Activated CD4-positive, alpha-beta memory T cell treated with anti-CD3 and anti-CD28 coated beads, Interleukin-2, amount 10 ng/mL, durations not matched to agents 7 days and 5 days (primary cell): ENCODE measurements at regions of chr5 and their contacts with region 1.

Region 1: DNA sequence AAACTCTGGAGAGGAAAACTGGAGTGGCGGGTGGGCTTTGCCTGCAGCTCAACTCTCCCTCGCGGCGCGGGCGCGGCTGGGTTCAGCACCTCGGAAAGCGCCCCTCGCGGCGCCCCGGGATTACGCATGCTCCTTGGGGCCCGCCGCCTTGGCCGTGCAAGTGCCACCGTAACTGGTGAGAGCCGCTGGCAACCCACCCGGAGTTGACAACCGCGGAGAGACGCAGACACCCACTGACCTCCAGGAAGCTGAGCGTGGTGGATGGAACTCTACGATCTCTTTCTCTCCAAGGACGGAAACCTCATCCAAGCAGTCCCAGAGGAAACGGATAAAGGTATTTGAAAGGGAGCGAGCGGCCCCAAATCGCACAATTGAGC is 194 bp upstream of the RXFP3 start:
- DNase-seq: peak; percentile 48
- H3K4me3 Mint-ChIP-seq: no peak overlapping the region
- H3K27ac Mint-ChIP-seq: no peak overlapping the region
- H3K4me1 Mint-ChIP-seq: peaks cover 2% of the 10 kb centered on the region
- H3K27me3 Mint-ChIP-seq: peaks cover 49% of the 10 kb centered on the region

Region 2: GRCh38 chr5:33433303-33434240 is 502.4 kb before region 1 on chr5:
- CTCF ChIA-PET with region 1: interaction called, 19 read pairs
- POLR2A ChIA-PET with region 1: interaction called, 3 read pairs
- DNase-seq: no peak
- H3K4me3 Mint-ChIP-seq: no peak overlapping the region
- H3K27ac Mint-ChIP-seq: no peak overlapping the region
- H3K4me1 Mint-ChIP-seq: peaks cover 7% of the 10 kb centered on the region
- H3K27me3 Mint-ChIP-seq: no peaks in the 10 kb centered on the region

Region 3: DNA sequence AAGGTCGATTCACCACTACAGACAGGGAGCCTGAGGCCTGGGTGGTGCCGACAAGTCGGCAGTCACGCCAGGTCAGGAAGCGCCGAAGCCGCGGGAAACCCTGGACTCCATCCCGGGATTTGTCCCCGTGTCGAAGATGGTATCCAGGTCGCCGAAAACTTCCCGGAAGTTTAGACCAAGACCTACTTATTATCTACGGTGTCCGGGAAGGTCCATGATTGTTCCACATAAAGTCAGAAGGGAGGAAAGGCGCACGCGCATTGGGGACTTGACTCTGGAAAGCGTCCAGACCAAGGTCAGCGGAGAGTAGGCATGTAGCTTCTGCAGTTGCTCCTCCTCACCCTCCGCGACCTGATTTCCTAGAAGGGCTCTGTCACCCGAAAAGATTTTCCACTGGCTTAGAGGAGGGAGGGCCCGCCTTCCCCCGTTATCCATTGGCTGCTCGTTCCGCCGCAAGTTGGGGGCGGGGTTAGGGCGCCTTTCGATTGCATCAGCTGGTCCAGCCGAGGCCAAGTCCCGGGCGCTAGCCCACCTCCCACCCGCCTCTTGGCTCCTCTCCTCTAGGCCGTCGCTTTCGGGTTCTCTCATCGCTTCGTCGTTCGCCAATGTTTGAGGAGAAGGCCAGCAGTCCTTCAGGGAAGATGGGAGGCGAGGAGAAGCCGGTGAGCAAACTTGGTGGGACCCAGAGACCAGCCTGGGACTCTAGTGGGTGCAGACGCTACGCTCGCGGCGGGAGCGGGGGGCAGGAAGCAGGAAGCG is 495.3 kb before region 1 on chr5 and contains the start of gene TARS1:
- CTCF ChIA-PET with region 1: interaction called, 19 read pairs
- POLR2A ChIA-PET with region 1: interaction called, 3 read pairs
- DNase-seq: peak; percentile 96
- H3K4me3 Mint-ChIP-seq: no peak within 1 kb of the TSS
- H3K27ac Mint-ChIP-seq: no peak within 1 kb of the TSS
- H3K4me1 Mint-ChIP-seq: peaks cover 32% of the 10 kb centered on the region
- H3K27me3 Mint-ChIP-seq: no peaks in the 10 kb centered on the region
- total RNA-seq, gene TARS1: 195 to 201 TPM

Region 4: DNA sequence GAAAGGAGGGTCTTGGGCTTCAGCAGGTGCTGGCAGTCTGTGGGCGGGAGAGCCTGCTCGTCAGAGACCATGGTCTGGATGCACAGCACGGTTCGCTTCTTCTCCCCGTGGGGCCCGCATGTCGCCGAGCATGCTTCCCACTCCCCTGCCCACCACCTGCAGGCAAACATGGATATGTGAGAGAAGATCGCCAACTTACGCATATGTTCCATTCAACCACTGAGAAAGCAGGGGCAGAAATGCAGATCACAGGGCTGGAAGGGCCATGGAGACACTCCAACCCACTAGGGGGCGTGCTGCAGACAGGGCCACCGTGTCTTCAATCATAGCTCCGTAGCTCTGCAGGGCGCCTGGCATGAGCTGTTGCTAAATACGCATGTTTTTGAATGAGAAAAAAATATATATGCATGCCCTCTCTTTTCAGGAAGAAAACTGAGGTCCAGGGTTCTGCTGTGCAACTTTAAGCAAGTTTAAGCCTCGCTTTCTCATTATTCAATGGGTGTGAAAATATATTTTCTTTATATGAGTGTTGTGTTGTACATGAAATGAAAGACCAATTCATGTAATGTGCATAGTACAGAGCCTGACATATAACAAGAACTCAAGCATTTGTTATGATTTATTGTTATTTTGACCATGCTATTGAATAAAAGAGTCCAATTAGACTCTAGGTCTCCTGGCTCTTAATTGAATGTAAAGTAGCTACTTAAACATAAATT is 347.2 kb before region 1 on chr5:
- CTCF ChIA-PET with region 1: interaction called, 38 read pairs
- POLR2A ChIA-PET with region 1: no interaction called
- DNase-seq: peak; percentile 48
- H3K4me3 Mint-ChIP-seq: no peak overlapping the region
- H3K27ac Mint-ChIP-seq: no peak overlapping the region
- H3K4me1 Mint-ChIP-seq: no peaks in the 10 kb centered on the region
- H3K27me3 Mint-ChIP-seq: no peaks in the 10 kb centered on the region